GM23248 (cell line): ENCODE measurements at regions of chr11 and their contacts with region 1.

Region 1: GRCh38 chr11:27183672-27184457 is 143.2 kb downstream of the BBOX1 start:
- DNase-seq: peak; percentile 86
- H3K4me3 ChIP-seq: no peak overlapping the region
- H3K27ac ChIP-seq: peak overlapping the region; percentile 37
- H3K4me1 ChIP-seq: peaks cover 29% of the 10 kb centered on the region
- H3K27me3 ChIP-seq: no peaks in the 10 kb centered on the region

Region 2: GRCh38 chr11:27296497-27296896 is 112.6 kb after region 1 on chr11:
- in situ Hi-C with region 1: loop called (anchors 10 kb)
- DNase-seq: peak; percentile 77
- H3K4me3 ChIP-seq: no peak overlapping the region
- H3K27ac ChIP-seq: no peak overlapping the region
- H3K4me1 ChIP-seq: peaks cover 48% of the 10 kb centered on the region
- H3K27me3 ChIP-seq: no peaks in the 10 kb centered on the region

Region 3: DNA sequence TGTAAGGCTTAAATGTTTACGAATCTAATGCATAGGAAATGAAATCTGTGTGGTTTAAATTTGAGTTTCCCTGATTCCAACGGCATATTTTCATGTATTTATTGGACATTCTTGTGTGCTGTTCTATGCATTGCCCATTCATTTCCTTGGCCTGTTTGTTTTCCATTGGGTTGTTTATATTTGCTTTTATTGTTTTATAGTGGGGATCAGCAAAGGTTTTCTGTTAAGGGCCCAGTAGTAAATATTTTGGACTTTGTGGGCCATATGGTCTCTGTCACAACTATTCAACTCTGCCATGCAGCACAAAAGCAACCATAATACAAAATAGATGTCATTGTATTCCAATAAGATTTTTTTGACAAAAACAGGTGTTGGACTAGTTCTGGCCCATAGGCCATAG is 294.0 kb after region 1 on chr11:
- in situ Hi-C with region 1: loop called (anchors 5 kb)
- DNase-seq: no peak
- H3K4me3 ChIP-seq: no peak overlapping the region
- H3K27ac ChIP-seq: no peak overlapping the region
- H3K4me1 ChIP-seq: peaks cover 5% of the 10 kb centered on the region; the same call in 1 of the 2 replicates
- H3K27me3 ChIP-seq: no peaks in the 10 kb centered on the region